ENCODE measurements at regions of chr1 and their contacts with region 1.

Region 1: GRCh38 chr1:39462074-39462473 is 29.4 kb upstream of the BMP8A start:
- DNase-seq: no peak
- ATAC-seq: no peak
- H3K4me3 ChIP-seq: no peak overlapping the region
- H3K27ac ChIP-seq: no peak overlapping the region
- H3K4me1 ChIP-seq: no peaks in the 10 kb centered on the region
- H3K27me3 ChIP-seq: no peaks in the 10 kb centered on the region
- CTCF ChIP-seq: no peak
- EP300 ChIP-seq: no peak
- POLR2A ChIP-seq: no peak
- RAD21 ChIP-seq: no peak

Region 2: DNA sequence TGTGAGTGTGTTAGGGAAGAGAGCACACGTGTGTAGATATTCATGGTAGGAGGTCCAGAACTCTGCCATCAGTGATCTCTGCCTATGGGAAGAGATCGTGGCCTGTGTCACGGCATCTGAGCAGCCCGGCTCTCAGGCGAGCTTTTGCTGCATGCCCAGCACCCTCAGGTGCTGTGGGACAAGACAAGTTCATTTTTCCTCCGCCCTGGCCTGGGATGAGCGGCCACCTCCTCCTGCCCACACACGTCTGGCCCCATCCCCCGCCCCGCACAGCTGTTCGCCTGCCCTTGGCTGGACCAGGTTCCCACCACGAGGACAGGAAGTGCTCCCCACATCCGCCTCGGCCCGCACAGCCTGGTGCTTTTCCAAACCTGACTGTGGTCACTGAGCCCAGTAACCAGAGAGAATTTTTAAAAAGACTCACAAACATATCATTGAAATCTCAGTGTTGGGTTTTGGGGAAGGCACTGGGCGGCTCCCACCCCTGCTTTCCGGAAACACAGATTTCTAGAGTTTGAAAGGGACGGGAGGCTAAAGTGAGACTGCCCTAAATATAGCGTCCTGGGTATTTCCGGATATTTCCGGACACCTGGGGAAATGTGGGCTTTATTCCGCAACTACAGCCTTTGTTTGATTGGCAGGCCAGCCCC is 47.4 kb after region 1 on chr1:
- CTCF ChIA-PET with region 1: no interaction called
- POLR2A ChIA-PET with region 1: no interaction called
- RAD21 ChIA-PET with region 1: no interaction called
- SMC1A ChIA-PET with region 1: no interaction called
- in situ Hi-C with region 1: no loop called
- intact Hi-C with region 1: no loop called
- DNase-seq: peak; percentile 54
- ATAC-seq: peak; percentile 82
- H3K4me3 ChIP-seq: no peak overlapping the region; the same call in 1 of the 2 replicates
- H3K27ac ChIP-seq: peak overlapping the region; percentile 72
- H3K4me1 ChIP-seq: peaks cover 18% of the 10 kb centered on the region
- H3K27me3 ChIP-seq: no peaks in the 10 kb centered on the region
- CTCF ChIP-seq: no peak
- EP300 ChIP-seq: 0 out of 4 replicates have a peak, but pooled peaks of 1 of the 2 experiments have one; percentile 27
- POLR2A ChIP-seq: peak; percentile 44; the same call in 1 of the 2 replicates
- RAD21 ChIP-seq: no peak

Region 3: DNA sequence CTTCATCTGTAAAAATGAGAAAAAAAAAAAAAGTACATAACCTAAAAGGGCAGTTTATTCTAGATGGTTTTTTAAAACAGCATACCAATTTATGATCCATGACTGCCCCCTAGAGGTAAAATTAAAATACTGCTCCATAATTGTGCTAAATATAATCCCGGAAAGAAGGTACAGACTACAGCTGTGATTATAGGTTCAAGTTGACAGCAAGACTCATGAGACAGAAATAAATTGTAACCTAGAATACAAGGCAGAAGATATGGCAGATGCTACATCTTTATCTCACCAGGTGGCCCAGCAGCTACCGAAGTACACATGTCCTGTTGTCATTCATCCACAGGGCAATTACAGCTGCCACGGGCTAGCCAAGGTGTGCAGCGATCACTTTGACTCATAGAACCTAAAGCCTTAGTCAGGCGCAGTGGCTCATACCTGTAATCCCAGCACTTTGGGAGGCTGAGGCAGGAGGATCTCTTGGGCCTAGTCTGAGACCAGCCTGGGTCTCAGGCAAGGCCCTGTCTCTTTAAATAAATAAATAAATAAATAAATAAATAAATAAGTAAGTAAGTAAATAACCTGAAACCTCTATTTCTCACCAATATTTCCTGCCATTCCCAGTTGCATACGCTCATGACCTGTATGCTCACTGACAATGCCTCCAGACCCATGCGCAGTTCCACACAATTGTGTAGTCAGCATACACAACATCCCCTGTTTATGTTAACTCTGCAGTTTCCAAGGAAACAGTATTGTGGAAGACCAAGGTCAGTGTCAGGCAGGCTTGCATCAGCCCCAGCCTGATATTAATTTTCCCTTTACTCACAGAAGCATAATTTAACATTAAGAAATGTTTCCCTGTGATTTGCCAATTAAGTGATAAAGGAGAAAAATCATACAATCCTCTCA is 258.3 kb after region 1 on chr1:
- CTCF ChIA-PET with region 1: no interaction called
- POLR2A ChIA-PET with region 1: no interaction called
- RAD21 ChIA-PET with region 1: no interaction called
- SMC1A ChIA-PET with region 1: no interaction called
- in situ Hi-C with region 1: no loop called
- intact Hi-C with region 1: loop called (anchors 10 kb)
- DNase-seq: no peak
- ATAC-seq: peak; percentile 76
- H3K4me3 ChIP-seq: no peak overlapping the region
- H3K27ac ChIP-seq: no peak overlapping the region
- H3K4me1 ChIP-seq: no peaks in the 10 kb centered on the region
- H3K27me3 ChIP-seq: no peaks in the 10 kb centered on the region
- CTCF ChIP-seq: peak; percentile 34 to 74 (median 59)
- EP300 ChIP-seq: no peak
- POLR2A ChIP-seq: no peak
- RAD21 ChIP-seq: peak; percentile 87

Measured in GM12878 (cell line).